ENCODE measurements at regions of chrX and their contacts with region 1.

Region 1: GRCh38 chrX:130395331-130395730 is 6.5 kb upstream of the RBMX2 start:
- DNase-seq: no peak
- H3K4me3 ChIP-seq: no peak overlapping the region
- H3K27ac ChIP-seq: no peak overlapping the region
- H3K4me1 ChIP-seq: no peaks in the 10 kb centered on the region
- H3K27me3 ChIP-seq: peaks cover 0 to 3% (median 0%) of the 10 kb centered on the region in 3 donors
- CTCF ChIP-seq: no peak
- EP300 ChIP-seq: no peak
- POLR2A ChIP-seq: no peak

Region 2: DNA sequence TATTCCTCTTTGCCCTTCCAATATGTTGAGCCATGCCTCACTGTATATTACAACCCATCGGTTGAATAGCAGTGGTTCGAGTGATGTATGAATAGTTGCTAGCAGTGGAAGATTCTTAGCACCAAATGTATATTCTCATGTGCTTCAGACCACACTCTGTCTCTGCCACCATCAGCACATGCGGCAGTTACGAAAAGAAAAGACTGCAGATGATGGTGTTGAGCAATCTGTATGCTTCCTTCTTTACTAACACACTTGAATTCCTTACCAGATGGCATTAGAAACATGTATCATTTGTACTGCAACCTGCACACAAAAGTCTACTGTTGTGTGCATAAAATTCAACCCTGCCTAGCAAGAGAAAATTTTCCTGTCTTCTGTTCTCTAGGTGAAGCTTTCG is 293.0 kb after region 1 on chrX:
- intact Hi-C with region 1: no loop called
- DNase-seq: no peak
- H3K4me3 ChIP-seq: no peak overlapping the region
- H3K27ac ChIP-seq: no peak overlapping the region
- H3K4me1 ChIP-seq: no peaks in the 10 kb centered on the region
- H3K27me3 ChIP-seq: no peaks in the 10 kb centered on the region
- CTCF ChIP-seq: no peak
- EP300 ChIP-seq: no peak
- POLR2A ChIP-seq: no peak

Region 3: DNA sequence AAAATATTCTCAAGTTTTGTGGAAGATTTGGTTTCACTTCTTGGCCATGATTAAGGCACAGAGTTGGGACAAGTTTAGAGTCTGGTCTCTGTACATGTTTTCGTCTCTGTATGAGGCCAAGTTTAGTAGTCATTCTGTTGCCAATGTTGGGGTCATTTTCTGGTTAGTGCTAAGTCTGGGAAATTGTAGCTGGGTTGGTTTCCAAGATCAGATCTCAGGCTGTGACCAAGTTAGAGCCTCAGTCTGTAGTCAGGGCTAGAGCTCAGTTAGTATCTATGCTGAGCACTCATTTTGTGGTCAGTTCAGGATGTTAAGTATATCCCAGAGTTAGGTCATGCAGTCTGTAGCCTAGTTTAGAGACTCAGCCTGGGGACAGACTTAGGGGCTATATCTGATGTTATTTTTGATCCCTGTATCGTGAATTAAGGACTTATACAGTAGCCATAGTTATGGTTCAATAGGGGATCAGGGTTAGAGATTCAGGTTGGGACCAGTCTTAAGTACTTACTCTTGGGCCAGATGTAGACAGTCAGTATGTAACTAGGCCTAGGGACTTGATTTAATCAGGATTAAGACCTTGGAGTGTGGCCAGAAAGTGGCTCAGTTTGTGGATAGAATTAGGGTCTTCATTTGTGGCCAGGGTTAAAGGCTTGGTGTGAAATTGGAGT is 514.3 kb after region 1 on chrX:
- intact Hi-C with region 1: loop called (anchors 5 kb)
- DNase-seq: no peak
- H3K4me3 ChIP-seq: no peak overlapping the region
- H3K27ac ChIP-seq: no peak overlapping the region
- H3K4me1 ChIP-seq: no peaks in the 10 kb centered on the region
- H3K27me3 ChIP-seq: no peaks in the 10 kb centered on the region
- CTCF ChIP-seq: no peak
- EP300 ChIP-seq: no peak
- POLR2A ChIP-seq: no peak

Measured in sigmoid colon (tissue), 7 donors.